ENCODE measurements at regions of chr6 and their contacts with region 1.

Region 1: GRCh38 chr6:94636780-94637385 is 940.5 kb upstream of the MANEA start:
- DNase-seq: peak; percentile 17
- ATAC-seq: peak; percentile 66; the same call in 1 of the 2 replicates
- H3K4me3 ChIP-seq: no peak overlapping the region
- H3K27ac ChIP-seq: no peak overlapping the region
- H3K4me1 ChIP-seq: no peaks in the 10 kb centered on the region
- H3K27me3 ChIP-seq: no peaks in the 10 kb centered on the region
- CTCF ChIP-seq: peak; percentile 63

Region 2: GRCh38 chr6:95091823-95092436 is 455.0 kb after region 1 on chr6:
- CTCF ChIA-PET with region 1: no interaction called
- POLR2A ChIA-PET with region 1: no interaction called
- in situ Hi-C with region 1: no loop called
- intact Hi-C with region 1: loop called (anchors 2 kb)
- DNase-seq: no peak
- ATAC-seq: peak; percentile 84
- H3K4me3 ChIP-seq: no peak overlapping the region
- H3K27ac ChIP-seq: no peak overlapping the region
- H3K4me1 ChIP-seq: peaks cover 16% of the 10 kb centered on the region
- H3K27me3 ChIP-seq: no peaks in the 10 kb centered on the region
- CTCF ChIP-seq: peak; percentile 60; the same call in 1 of the 2 replicates